ENCODE measurements at regions of chr20 and their contacts with region 1.

Region 1: DNA sequence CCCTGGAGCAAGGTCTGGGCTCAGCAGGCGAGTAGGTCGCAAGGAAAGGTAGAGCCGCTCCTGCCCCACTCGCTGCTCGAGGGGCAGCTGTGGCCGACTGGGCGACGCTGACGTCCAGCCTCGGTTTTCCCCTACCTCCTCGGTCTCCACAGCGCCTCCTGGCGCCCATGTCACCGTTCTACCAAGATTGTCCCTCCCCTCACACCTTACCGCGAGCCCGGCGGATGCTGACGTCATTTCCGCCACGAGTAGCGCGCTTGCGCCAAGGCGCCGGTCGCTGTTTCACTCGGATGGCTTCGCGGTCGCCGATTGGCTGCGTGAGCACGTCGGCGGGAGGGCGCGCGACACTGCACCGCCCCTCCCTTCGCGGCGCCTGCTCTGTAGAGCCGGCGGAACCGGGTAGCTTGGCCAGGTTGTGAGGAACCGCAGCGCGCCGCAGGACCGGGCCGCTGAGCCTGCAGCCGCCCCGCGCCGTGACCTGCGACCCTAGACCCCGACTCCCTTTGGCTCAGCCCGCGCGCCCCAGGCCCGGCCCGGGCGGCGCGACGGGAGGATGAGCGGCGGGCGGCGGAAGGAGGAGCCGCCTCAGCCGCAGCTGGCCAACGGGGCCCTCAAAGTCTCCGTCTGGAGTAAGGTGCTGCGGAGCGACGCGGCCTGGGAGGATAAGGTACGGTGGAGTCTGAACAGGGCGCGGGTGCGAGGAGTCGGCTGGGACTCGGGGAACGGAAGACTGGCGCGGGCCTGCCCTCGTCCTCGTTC is at the start of gene RAB5IF:
- DNase-seq: peak; percentile 98 to 99 (median 99)
- H3K4me3 ChIP-seq: peak within 1 kb of the TSS; percentile 62 to 81
- H3K4me3 Mint-ChIP-seq: peak within 1 kb of the TSS; percentile 91 to 98 (median 97)
- H3K27ac ChIP-seq: peak within 1 kb of the TSS; percentile 98
- H3K27ac Mint-ChIP-seq: peak within 1 kb of the TSS; percentile 97 to 99 (median 98)
- H3K4me1 ChIP-seq: peaks cover 30% of the 10 kb centered on the region
- H3K4me1 Mint-ChIP-seq: peaks cover 15 to 43% (median 26%) of the 10 kb centered on the region in 4 donors
- H3K27me3 ChIP-seq: no peaks in the 10 kb centered on the region
- H3K27me3 Mint-ChIP-seq: peaks cover 1 to 2% of the 10 kb centered on the region in 2 donors
- total RNA-seq, gene RAB5IF: 63.4 to 67.5 TPM

Region 2: GRCh38 chr20:36506253-36506652 is 99.3 kb before region 1 on chr20:
- CTCF ChIA-PET with region 1: interaction called, 3 read pairs
- POLR2A ChIA-PET with region 1: no interaction called
- intact Hi-C with region 1: loop called (anchors 1 kb)
- DNase-seq: peak in 4 of 5 donors; percentile 11 to 33 (median 15)
- H3K4me3 ChIP-seq: no peak overlapping the region
- H3K4me3 Mint-ChIP-seq: no peak overlapping the region
- H3K27ac ChIP-seq: no peak overlapping the region
- H3K27ac Mint-ChIP-seq: peak overlapping the region in 2 of 7 donors; percentile 29 to 48
- H3K4me1 ChIP-seq: peaks cover 5% of the 10 kb centered on the region
- H3K4me1 Mint-ChIP-seq: peaks cover 5 to 14% (median 9%) of the 10 kb centered on the region in 4 donors
- H3K27me3 ChIP-seq: no peaks in the 10 kb centered on the region
- H3K27me3 Mint-ChIP-seq: no peaks in the 10 kb centered on the region

Region 3: GRCh38 chr20:36562724-36563123 is 42.9 kb before region 1 on chr20:
- CTCF ChIA-PET with region 1: interaction called, 30 read pairs
- POLR2A ChIA-PET with region 1: interaction called, 16 read pairs
- intact Hi-C with region 1: no loop called
- DNase-seq: no peak
- H3K4me3 ChIP-seq: no peak overlapping the region
- H3K4me3 Mint-ChIP-seq: no peak overlapping the region
- H3K27ac ChIP-seq: no peak overlapping the region
- H3K27ac Mint-ChIP-seq: peak overlapping the region in 1 of 7 donors; percentile 3
- H3K4me1 ChIP-seq: no peaks in the 10 kb centered on the region
- H3K4me1 Mint-ChIP-seq: peaks cover 2 to 8% (median 5%) of the 10 kb centered on the region in 4 donors
- H3K27me3 ChIP-seq: no peaks in the 10 kb centered on the region
- H3K27me3 Mint-ChIP-seq: no peaks in the 10 kb centered on the region

Region 4: DNA sequence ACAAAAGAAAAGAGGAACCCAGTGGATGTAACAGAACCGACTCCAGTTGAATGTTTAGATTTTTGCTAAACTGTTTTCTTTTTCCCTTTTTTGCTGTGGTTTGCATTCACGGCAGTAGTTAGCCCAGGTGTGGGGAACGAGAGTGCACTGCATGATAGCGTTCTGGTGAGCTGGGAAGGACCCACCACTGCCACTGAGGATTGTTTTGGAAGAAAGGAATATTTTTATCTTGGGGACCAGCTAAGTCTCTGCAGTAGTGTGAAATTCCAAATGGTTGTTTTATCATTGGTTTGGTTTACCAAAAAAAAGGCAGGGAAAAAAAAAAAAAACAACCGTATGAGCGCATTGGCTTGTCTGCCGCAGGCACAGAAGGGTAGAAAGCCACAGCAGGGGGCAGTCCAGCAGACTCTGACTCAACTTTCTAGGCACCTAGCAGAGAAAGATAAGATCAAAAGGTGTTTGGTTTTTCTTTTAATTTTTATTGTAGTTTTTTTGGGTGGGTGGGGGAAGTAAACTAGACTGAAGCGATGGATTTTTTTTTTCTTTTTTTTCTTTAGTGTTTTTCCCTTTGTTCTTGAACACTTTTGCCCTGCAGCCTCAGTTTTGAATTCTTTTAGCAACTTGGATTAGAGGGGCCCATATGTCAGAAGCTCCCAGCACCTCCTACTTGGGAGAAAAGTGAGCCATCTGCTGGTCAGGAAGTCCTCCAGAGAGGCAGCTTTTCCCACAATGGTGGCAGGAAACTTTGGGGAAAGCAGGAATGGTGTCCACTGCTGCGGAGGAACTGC is 13.5 kb before region 1 on chr20:
- CTCF ChIA-PET with region 1: interaction called, 70 read pairs
- POLR2A ChIA-PET with region 1: interaction called, 142 read pairs
- intact Hi-C with region 1: loop called (anchors 1 kb)
- DNase-seq: peak; percentile 51 to 87 (median 63)
- H3K4me3 ChIP-seq: no peak overlapping the region
- H3K4me3 Mint-ChIP-seq: peak overlapping the region in 7 of 8 donors; percentile 26 to 77 (median 57)
- H3K27ac ChIP-seq: peak overlapping the region; percentile 38
- H3K27ac Mint-ChIP-seq: peak overlapping the region; percentile 77 to 93 (median 86)
- H3K4me1 ChIP-seq: peaks cover 51% of the 10 kb centered on the region
- H3K4me1 Mint-ChIP-seq: peaks cover 29 to 64% (median 44%) of the 10 kb centered on the region in 4 donors
- H3K27me3 ChIP-seq: no peaks in the 10 kb centered on the region
- H3K27me3 Mint-ChIP-seq: no peaks in the 10 kb centered on the region

Region 5: DNA sequence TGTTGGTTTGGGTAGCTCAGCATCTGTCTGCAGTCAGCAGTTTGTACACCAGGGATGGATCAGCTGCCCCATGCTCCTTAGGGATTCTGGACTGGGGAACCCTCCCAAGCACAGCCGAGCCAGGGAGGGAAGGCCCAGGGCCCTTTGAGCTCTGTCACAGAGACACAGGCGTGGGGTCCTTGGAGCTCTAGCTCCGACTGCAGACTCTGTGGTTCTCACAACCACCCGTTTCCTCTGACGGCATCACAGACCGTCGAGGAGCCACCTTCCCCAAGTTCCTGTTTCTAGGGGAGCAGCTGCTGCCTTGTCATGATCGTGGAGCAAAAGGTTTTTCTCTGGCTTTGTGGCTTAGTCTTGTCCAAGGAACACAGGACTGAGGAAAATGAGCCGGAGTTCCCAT is 40.4 kb after region 1 on chr20 and contains the start of gene SLA2:
- CTCF ChIA-PET with region 1: interaction called, 83 read pairs
- POLR2A ChIA-PET with region 1: interaction called, 131 read pairs
- intact Hi-C with region 1: loop called (anchors 2 kb)
- DNase-seq: peak; percentile 65 to 85 (median 71)
- H3K4me3 ChIP-seq: peak within 1 kb of the TSS; percentile 75 to 83
- H3K4me3 Mint-ChIP-seq: peak within 1 kb of the TSS; percentile 92 to 99 (median 98)
- H3K27ac ChIP-seq: peak within 1 kb of the TSS; percentile 77
- H3K27ac Mint-ChIP-seq: peak within 1 kb of the TSS; percentile 97 to 99 (median 98)
- H3K4me1 ChIP-seq: peaks cover 47% of the 10 kb centered on the region
- H3K4me1 Mint-ChIP-seq: peaks cover 28 to 67% (median 49%) of the 10 kb centered on the region in 4 donors
- H3K27me3 ChIP-seq: no peaks in the 10 kb centered on the region
- H3K27me3 Mint-ChIP-seq: no peaks in the 10 kb centered on the region
- total RNA-seq, gene SLA2: 28.7 to 29.9 TPM

Region 6: DNA sequence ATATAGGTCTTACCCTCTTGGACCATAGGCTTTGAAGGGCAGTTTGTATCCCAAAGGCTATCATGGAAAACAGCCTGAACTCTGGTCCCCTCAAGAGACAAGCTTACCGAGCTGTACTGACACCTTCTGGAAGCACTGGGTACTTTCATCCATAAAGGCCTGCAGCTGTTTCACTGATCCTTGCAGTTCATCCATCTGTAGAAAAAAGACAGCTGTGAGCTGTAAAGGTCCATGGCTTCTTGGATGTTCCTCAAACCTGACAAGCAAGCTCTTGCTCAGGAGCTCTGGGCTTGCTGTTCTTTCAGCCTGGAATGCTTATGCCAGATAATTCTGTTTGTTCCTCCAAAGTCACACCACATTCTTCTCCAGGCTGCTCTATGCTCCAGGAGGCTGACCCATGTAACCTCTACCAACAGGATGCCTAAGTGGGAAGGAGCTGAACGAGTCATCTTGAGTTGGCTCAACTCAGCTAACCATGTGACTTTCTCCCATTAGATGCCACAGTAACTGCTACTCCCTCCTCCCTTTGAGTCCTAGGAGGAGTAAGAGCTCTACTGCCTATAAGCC is 149.2 kb after region 1 on chr20:
- CTCF ChIA-PET with region 1: interaction called, 62 read pairs
- POLR2A ChIA-PET with region 1: interaction called, 7 read pairs
- intact Hi-C with region 1: no loop called
- DNase-seq: peak; percentile 46 to 50 (median 48)
- H3K4me3 ChIP-seq: no peak overlapping the region
- H3K4me3 Mint-ChIP-seq: no peak overlapping the region
- H3K27ac ChIP-seq: no peak overlapping the region
- H3K27ac Mint-ChIP-seq: peak overlapping the region in 3 of 7 donors; percentile 13 to 55 (median 47)
- H3K4me1 ChIP-seq: no peaks in the 10 kb centered on the region
- H3K4me1 Mint-ChIP-seq: peaks cover 0 to 5% (median 3%) of the 10 kb centered on the region in 4 donors
- H3K27me3 ChIP-seq: no peaks in the 10 kb centered on the region
- H3K27me3 Mint-ChIP-seq: no peaks in the 10 kb centered on the region

Measured in CD4-positive, alpha-beta memory T cell (primary cell).